Posterior vena cava (tissue), 2 donors: ENCODE measurements at regions of chr2 and their contacts with region 1.

Region 1: GRCh38 chr2:226251661-226252060 is 548.0 kb downstream of the IRS1 start:
- DNase-seq: no peak

Region 2: GRCh38 chr2:226179012-226179411 is 72.6 kb before region 1 on chr2:
- intact Hi-C with region 1: loop called in 1 of 2 experiments (anchors 2 kb)
- DNase-seq: no peak